ENCODE measurements at regions of chr20 and their contacts with region 1.

Region 1: DNA sequence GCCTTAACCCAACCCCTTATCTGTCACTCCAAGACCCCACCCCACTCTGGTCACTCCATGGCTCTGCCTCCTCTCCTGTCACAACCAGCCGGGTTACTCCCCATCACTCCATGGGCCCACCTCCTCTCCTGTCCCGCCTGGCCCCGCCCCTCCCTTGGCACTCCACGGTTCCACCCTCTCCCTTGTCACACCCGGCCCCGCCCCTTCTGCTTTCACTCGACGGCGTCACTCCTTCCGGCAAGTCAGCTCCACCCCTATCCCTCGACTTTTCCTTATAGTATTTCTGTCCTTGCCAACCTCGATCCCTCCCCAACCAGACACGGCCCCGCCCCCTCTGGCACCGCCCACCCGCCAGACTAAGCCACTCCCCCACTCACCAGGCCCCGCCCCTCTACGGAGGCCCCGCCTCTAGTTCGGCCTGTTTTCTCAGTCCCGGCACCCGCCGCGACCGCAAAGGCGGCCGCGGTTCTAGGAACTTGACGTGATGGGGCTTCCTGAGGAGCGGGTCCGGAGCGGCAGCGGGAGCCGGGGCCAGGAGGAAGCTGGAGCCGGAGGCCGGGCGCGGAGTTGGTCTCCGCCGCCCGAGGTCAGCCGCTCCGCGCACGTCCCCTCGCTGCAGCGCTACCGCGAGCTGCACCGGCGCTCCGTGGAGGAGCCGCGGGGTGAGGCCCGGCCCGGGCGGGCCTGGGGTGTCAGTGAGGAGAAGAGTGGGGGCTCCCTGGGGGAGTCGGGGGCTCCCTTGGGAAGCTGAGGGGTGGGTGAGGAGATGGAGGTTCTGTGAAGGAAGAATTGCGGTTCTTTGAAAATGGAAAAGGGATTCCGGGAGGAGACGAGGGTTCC is at the start of gene ACSS2:
- DNase-seq: peak; percentile 100
- ATAC-seq: peak; percentile 69
- total RNA-seq, gene ACSS2: 343 to 383 TPM

Region 2: GRCh38 chr20:34452281-34452982 is 423.9 kb before region 1 on chr20:
- intact Hi-C with region 1: no loop called
- DNase-seq: no peak
- ATAC-seq: no peak

Region 3: DNA sequence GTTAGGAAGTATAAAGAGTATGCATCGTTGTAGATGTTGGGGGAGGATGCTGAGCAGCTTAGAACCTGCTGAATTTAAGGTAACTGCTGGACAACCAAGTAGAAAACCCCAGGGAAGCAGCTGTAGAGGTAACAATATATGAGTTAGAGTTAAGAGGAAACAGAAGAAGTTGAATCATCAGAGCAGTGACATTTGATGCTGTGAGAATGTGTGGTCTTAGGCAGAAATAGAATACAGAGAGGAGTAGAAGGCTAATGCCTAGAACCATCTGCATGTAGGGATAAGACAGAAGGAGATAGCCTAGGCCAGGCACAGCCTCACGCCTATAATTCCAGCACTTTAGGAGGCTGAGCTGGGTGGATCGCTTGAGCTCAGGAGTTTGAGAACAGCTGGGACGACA is 382.7 kb before region 1 on chr20:
- intact Hi-C with region 1: no loop called
- DNase-seq: no peak
- ATAC-seq: no peak

Region 4: GRCh38 chr20:34948030-34948429 is 71.6 kb after region 1 on chr20:
- intact Hi-C with region 1: loop called in 1 of 2 experiments (anchors 2 kb)
- DNase-seq: no peak
- ATAC-seq: no peak

Region 5: GRCh38 chr20:34965051-34965450 is 88.7 kb after region 1 on chr20:
- intact Hi-C with region 1: no loop called
- DNase-seq: no peak
- ATAC-seq: no peak

Measured in left colon (tissue), 2 donors.